Activated B cell treated with CpG ODN at 0.5 μM for 24 hours (primary cell): ENCODE measurements at regions of chr6 and their contacts with region 1.

Region 1: DNA sequence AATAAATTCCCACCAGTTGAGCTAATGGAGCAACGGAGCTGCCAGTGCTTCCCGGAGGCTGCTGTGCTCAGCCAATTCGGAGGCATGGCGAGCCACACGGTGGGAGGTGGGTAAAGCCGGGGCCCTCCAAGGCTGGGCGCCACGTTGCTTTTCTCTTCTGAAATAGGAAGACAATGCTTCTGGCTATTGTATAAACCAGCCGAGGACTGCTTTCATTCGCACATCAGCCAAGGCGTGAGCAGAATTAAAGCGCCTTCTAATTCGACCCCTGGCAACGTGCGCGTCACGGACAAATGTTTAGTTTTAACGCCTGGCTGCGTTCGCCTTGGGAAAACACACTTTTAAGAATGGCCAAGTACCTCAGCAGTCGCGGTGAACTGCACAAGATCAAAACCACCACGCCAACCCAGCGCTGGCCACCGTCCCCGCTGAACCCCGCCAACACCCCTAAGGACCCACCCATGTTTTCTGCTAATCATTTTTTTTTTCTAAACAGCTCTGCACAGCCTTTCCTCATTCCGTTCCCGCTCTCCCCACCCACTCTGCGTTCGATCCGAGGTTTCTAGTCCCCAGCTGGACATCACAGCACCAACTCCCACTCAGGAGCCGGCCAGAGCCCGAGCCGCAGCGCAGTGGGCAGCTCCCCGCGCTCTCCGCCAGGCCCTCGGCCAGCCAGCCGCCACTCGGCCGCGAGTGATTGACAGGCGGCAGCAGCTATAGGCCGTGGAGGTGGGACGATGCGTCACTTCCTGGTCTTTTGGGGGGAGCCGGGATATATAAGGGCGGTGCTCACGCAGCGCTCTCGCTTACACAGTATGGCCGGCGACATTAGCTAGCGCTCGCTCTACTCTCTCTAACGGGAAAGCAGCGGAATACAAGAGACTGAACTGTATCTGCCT is at the start of gene AMD1:
- DNase-seq: peak; percentile 84
- ATAC-seq: peak; percentile 76
- H3K4me3 Mint-ChIP-seq: peak within 1 kb of the TSS; percentile 99
- H3K27ac Mint-ChIP-seq: peak within 1 kb of the TSS; percentile 99
- H3K4me1 Mint-ChIP-seq: peaks cover 43% of the 10 kb centered on the region
- H3K27me3 Mint-ChIP-seq: no peaks in the 10 kb centered on the region
- CTCF ChIP-seq: no peak
- total RNA-seq, gene AMD1: 61.7 and 65.5 TPM in 2 replicates

Region 2: GRCh38 chr6:109482905-109483735 is 1391.1 kb before region 1 on chr6 and contains the start of gene ZBTB24:
- CTCF ChIA-PET with region 1: no interaction called
- POLR2A ChIA-PET with region 1: no interaction called
- intact Hi-C with region 1: loop called (anchors 10 kb)
- DNase-seq: peak; percentile 81
- ATAC-seq: peak; percentile 82
- H3K4me3 Mint-ChIP-seq: peak within 1 kb of the TSS; percentile 95
- H3K27ac Mint-ChIP-seq: peak within 1 kb of the TSS; percentile 85
- H3K4me1 Mint-ChIP-seq: peaks cover 52% of the 10 kb centered on the region
- H3K27me3 Mint-ChIP-seq: no peaks in the 10 kb centered on the region
- CTCF ChIP-seq: no peak
- total RNA-seq, gene ZBTB24: 22.8 and 25.4 TPM in 2 replicates

Region 3: GRCh38 chr6:110528101-110528929 is 345.9 kb before region 1 on chr6:
- CTCF ChIA-PET with region 1: no interaction called
- POLR2A ChIA-PET with region 1: no interaction called
- intact Hi-C with region 1: loop called (anchors 1 kb)
- DNase-seq: no peak
- ATAC-seq: peak; percentile 70
- H3K4me3 Mint-ChIP-seq: no peak overlapping the region
- H3K27ac Mint-ChIP-seq: no peak overlapping the region
- H3K4me1 Mint-ChIP-seq: no peaks in the 10 kb centered on the region
- H3K27me3 Mint-ChIP-seq: peaks cover 3% of the 10 kb centered on the region
- CTCF ChIP-seq: no peak

Region 4: DNA sequence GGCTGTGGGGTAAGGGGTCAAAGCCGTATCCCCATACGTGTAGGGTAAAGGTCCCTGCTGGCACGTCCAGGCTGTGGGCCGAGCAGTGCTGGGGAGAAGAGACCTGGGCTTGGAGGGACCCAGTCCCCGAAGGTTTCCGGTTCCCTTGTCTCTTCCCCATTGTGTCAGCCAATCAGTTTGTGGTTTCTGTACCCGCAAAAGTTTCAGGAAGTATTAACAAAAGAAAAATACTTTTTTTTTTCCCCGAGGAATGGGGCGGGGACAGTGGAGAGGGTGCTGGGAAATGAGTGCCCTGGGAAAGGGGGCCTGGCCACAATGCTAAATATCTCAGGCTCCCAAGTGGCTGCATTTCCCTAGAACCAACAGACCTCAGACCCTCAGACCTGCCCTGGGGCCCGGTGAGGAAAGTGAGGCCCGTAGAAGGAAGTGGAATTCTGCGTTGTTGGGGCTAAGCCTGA is 14.9 kb before region 1 on chr6:
- CTCF ChIA-PET with region 1: no interaction called
- POLR2A ChIA-PET with region 1: interaction called, 110 read pairs
- intact Hi-C with region 1: loop called (anchors 2 kb)
- DNase-seq: no peak
- ATAC-seq: peak; percentile 34
- H3K4me3 Mint-ChIP-seq: peak overlapping the region; percentile 67
- H3K27ac Mint-ChIP-seq: peak overlapping the region; percentile 78
- H3K4me1 Mint-ChIP-seq: peaks cover 13% of the 10 kb centered on the region
- H3K27me3 Mint-ChIP-seq: no peaks in the 10 kb centered on the region
- CTCF ChIP-seq: no peak

Region 5: DNA sequence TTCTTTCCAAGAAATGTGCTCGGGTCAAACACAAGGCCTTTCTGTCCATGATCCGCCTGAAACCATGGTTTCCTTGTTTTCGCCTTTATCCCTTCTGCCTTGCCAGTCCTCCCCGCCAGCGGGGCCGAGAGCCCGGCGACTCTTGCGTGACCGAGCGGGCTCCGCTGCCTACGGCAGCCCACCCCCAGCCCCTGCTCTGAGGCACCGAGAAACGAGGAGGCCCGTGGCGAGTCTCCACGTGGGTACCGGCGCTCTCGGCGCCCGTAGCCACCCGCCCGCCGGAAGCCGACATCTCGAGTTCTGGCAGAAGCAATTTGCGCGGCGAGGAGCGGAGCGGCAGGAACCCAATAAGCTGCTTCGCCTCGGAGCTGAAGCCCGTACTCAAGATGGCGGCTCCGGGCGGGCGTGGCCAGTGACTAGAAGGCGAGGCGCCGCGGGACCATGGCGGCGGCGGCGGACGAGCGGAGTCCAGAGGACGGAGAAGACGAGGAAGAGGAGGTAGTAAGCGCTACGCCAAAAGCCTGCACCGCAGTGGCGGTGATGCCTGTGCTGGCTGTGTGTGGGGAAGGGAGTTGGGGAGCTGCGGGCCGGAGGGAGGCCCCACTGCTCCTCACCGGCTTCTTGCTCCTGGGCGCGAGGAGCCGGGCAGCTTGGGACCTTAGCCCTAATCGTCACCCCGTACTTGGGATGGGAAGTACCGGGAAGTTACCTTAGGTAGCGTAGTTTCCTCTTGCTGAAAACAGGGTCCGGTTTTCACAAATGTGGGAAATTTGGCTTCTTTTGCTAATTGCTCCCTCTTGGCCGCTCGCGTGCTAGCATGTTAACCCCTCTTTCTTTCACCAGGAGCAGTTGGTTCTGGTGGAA is 84.3 kb after region 1 on chr6 and contains the start of gene GTF3C6:
- CTCF ChIA-PET with region 1: interaction called, 4 read pairs
- POLR2A ChIA-PET with region 1: interaction called, 100 read pairs
- intact Hi-C with region 1: loop called (anchors 1 kb)
- DNase-seq: peak; percentile 87
- ATAC-seq: peak; percentile 98
- H3K4me3 Mint-ChIP-seq: peak within 1 kb of the TSS; percentile 97
- H3K27ac Mint-ChIP-seq: peak within 1 kb of the TSS; percentile 98
- H3K4me1 Mint-ChIP-seq: peaks cover 19% of the 10 kb centered on the region
- H3K27me3 Mint-ChIP-seq: no peaks in the 10 kb centered on the region
- CTCF ChIP-seq: no peak
- total RNA-seq, gene GTF3C6: 76.7 and 93.3 TPM in 2 replicates

Region 6: DNA sequence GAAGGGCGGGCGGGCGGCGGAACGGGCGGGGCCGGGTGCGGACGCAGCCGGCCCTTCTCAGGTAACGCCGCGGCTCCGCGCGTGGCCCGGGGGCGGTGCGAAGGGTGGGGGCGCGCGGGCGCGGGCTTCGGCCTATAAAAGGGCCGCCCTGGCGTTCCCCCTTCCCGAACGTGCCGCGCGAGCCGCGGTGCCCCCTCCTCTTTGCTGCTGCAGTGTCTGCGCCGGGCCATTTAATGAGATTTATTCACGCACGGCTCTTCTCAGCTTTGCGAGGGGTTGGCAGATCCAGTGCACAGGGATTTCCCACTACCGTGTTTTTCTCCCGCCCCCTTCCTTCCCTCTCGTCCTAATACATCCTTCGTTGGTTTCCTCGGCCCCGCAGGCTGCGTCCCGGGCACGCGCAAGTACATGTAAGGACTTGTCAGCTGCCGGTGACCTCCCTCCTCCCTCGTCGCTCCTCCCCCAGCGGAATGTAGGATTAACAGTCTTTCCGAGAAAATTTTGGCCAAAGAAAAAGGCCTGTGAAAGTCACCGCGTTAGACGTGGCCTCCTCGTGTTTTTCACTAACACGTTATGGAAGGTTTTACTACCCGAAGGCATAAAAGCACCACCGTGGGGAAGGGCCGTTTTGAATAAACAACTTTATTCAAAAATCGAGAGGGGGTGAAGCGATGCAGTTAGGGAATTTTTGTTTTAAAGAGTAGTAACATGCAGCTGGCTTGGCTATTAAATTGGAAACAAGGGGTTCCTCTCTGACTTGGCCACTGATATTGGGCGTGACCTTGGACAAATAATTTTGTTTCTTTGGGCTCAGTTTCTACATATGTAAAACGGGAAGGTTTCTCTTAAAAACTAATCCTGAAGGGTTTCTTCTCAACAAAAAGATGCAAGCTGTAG is 609.8 kb after region 1 on chr6:
- CTCF ChIA-PET with region 1: no interaction called
- POLR2A ChIA-PET with region 1: interaction called, 5 read pairs
- intact Hi-C with region 1: loop called (anchors 5 kb)
- DNase-seq: peak; percentile 85
- ATAC-seq: peak; percentile 67
- H3K4me3 Mint-ChIP-seq: peak overlapping the region; percentile 97
- H3K27ac Mint-ChIP-seq: peak overlapping the region; percentile 99
- H3K4me1 Mint-ChIP-seq: peaks cover 37% of the 10 kb centered on the region
- H3K27me3 Mint-ChIP-seq: no peaks in the 10 kb centered on the region
- CTCF ChIP-seq: no peak